Sigmoid colon (tissue), 7 donors: ENCODE measurements at regions of chrX and their contacts with region 1.

Region 1: DNA sequence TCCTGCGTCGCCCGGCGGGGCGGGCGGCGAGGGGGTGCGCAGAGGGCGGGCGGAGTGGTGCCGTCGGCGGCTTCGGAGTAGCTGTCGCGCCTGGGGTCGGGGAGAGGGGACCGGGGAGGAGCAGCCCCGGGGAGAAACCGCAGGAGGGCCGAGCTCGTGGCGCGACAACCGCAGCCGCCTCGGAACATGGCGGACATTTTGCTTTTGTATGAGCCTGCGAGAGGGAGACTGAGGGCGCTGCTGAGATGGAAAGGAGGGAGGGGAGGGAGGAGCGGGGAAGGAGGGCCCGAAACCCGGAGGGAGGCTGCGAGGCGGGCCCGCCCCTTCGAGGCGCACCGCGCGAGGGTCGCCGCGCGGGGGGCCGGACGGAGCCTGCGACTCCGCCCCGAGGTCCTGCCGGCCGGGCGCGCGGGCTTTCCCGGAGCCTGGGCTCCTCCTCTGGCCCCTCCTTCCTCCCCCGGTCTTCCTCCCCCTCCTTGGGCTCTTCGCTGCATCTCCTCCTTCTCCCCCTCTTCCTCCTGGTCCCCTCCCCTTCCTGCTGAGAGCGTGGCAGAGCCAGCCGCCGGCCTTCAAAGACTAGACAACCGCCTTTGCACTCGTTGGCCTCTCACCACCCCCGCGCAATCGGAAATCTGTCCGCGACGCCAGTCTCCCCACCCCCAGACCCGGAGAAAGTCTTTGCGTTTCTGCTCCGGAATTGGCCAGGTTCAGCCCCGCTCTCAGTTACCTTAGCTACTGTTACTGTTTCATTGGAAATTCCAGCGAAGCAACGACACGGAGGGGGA is 1.1 kb downstream of the INTS6L start:
- DNase-seq: peak; percentile 94
- H3K4me3 ChIP-seq: peak overlapping the region; percentile 62 to 80 (median 68)
- H3K27ac ChIP-seq: peak overlapping the region; percentile 91 to 96 (median 94)
- H3K4me1 ChIP-seq: peaks cover 0 to 5% (median 0%) of the 10 kb centered on the region in 4 donors
- H3K27me3 ChIP-seq: no peaks in the 10 kb centered on the region
- CTCF ChIP-seq: no peak
- EP300 ChIP-seq: no peak
- POLR2A ChIP-seq: peak; percentile 22 to 31

Region 2: GRCh38 chrX:135973548-135974278 is 452.1 kb after region 1 on chrX and contains the start of gene MMGT1:
- intact Hi-C with region 1: loop called (anchors 10 kb)
- DNase-seq: peak; percentile 94
- H3K4me3 ChIP-seq: peak within 1 kb of the TSS; percentile 53 to 66 (median 63)
- H3K27ac ChIP-seq: peak within 1 kb of the TSS; percentile 88 to 93 (median 92)
- H3K4me1 ChIP-seq: peaks cover 0 to 16% (median 12%) of the 10 kb centered on the region in 4 donors
- H3K27me3 ChIP-seq: no peaks in the 10 kb centered on the region
- CTCF ChIP-seq: no peak
- EP300 ChIP-seq: no peak
- POLR2A ChIP-seq: peak; percentile 9 to 21
- total RNA-seq, gene MMGT1: 27.7 to 35.1 (median 32.5) TPM